Adrenal gland (tissue), 19 donors: ENCODE measurements at regions of chr3 and their contacts with region 1.

Region 1: DNA sequence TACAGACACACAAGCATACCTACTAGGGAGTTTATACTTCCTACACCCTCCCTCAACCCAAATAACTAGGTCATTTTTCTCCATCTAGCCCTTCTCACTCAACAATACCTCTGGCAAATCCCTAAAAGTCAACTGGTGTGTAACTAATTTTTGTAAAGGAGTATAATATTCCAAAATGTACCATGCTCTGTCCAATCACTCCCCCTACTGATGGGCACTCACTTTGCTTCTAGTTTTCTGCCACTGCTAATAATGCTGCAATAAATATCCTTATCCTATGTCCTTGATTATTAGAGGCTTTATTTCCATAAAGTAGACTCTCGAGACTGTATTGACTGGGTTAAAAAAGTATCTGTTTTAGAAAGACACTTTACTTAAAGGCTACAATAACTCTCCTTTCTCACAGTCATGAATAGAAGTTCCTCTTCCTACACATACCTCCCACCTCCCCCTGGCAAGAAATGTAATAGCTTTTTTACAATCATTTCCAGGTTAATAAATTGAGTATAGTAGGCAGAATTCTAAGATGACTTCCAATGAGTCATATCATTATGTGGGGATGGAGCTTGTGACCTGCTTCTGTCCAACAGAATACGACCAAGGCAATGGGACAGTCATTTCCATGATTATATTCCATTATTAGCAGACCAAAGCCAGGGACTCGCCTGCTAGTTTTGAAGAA is 30.0 kb downstream of the SHQ1 start:
- DNase-seq: peak in 3 of 7 donors; percentile 27 to 59 (median 40)
- H3K4me3 ChIP-seq: no peak overlapping the region
- H3K27ac ChIP-seq: peak overlapping the region in 2 of 5 donors; percentile 28 to 41
- H3K4me1 ChIP-seq: peaks cover 9 to 41% of the 10 kb centered on the region in 2 donors
- H3K27me3 ChIP-seq: no peaks in the 10 kb centered on the region
- CTCF ChIP-seq: peak; percentile 32 to 70 (median 56)
- POLR2A ChIP-seq: no peak

Region 2: GRCh38 chr3:71875461-71875947 is 942.7 kb before region 1 on chr3:
- intact Hi-C with region 1: loop called in 1 of 2 experiments (anchors 5 kb)
- DNase-seq: peak; percentile 83 to 92 (median 86)
- H3K4me3 ChIP-seq: no peak overlapping the region
- H3K27ac ChIP-seq: no peak overlapping the region
- H3K4me1 ChIP-seq: peaks cover 0 to 4% of the 10 kb centered on the region in 2 donors
- H3K27me3 ChIP-seq: no peaks in the 10 kb centered on the region
- CTCF ChIP-seq: peak; percentile 76 to 94 (median 88)
- POLR2A ChIP-seq: no peak

Region 3: GRCh38 chr3:71955240-71956068 is 862.8 kb before region 1 on chr3:
- intact Hi-C with region 1: loop called (anchors 5 to 10 kb)
- DNase-seq: peak; percentile 82 to 93 (median 84)
- H3K4me3 ChIP-seq: no peak overlapping the region
- H3K27ac ChIP-seq: no peak overlapping the region
- H3K4me1 ChIP-seq: peaks cover 0 to 8% of the 10 kb centered on the region in 2 donors
- H3K27me3 ChIP-seq: no peaks in the 10 kb centered on the region
- CTCF ChIP-seq: peak; percentile 63 to 85 (median 78)
- POLR2A ChIP-seq: no peak

Region 4: DNA sequence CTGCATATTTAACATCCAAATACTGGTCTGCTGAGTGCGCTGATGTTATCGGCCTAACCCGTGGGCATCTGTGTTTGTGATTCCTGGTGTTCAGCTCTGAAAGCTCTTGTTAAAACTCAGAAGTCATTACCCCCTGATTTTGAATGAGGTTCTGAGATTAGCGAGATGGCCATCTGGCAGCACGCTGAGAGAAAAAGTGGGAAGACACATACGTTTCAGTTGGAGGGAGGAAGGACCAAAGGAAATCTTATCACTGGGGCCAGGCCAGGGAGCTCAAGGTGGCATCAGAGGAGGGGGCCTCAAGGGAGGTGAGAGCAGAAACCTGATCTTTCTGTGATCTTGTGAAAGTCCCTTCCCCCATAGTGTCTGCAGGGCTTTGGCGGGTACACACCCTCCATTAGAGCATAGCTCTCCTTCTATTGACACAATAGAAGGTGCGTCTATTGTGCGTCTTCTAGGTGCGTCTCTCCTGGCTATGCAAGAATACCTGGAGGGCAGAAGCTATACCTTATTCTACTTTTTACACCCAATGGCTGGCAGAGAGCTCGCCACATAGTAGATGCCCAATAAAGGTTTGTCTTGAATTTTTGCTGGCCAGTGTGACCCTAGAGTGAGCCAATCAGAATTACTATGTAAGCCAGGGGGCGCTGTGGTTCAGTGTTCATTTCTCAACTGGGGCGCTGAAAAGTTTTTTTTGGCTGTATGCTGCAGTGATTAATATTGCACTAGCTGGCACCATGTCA is 152.4 kb before region 1 on chr3:
- intact Hi-C with region 1: loop called (anchors 5 kb)
- DNase-seq: peak; percentile 33 to 79 (median 64)
- H3K4me3 ChIP-seq: no peak overlapping the region
- H3K27ac ChIP-seq: no peak overlapping the region
- H3K4me1 ChIP-seq: no peaks in the 10 kb centered on the region
- H3K27me3 ChIP-seq: no peaks in the 10 kb centered on the region
- CTCF ChIP-seq: peak; percentile 47 to 64 (median 62)
- POLR2A ChIP-seq: no peak

Region 5: GRCh38 chr3:72673011-72673771 is 145.0 kb before region 1 on chr3:
- intact Hi-C with region 1: loop called (anchors 5 kb)
- DNase-seq: no peak
- H3K4me3 ChIP-seq: no peak overlapping the region
- H3K27ac ChIP-seq: no peak overlapping the region
- H3K4me1 ChIP-seq: no peaks in the 10 kb centered on the region
- H3K27me3 ChIP-seq: no peaks in the 10 kb centered on the region
- CTCF ChIP-seq: no peak
- POLR2A ChIP-seq: no peak